Activated CD4-positive, alpha-beta T cell treated with anti-CD3 and anti-CD28 coated beads, Interleukin-2, amount 10 ng/mL, durations not matched to agents 24 days and 14 days (primary cell): ENCODE measurements at regions of chr17 and their contacts with region 1.

Region 1: GRCh38 chr17:13594762-13595598 is 6.7 kb downstream of the HS3ST3A1 start:
- DNase-seq: peak; percentile 95
- H3K4me3 Mint-ChIP-seq: no peak overlapping the region
- H3K27ac Mint-ChIP-seq: no peak overlapping the region
- H3K4me1 Mint-ChIP-seq: peaks cover 7% of the 10 kb centered on the region
- H3K27me3 Mint-ChIP-seq: peaks cover 47% of the 10 kb centered on the region

Region 2: DNA sequence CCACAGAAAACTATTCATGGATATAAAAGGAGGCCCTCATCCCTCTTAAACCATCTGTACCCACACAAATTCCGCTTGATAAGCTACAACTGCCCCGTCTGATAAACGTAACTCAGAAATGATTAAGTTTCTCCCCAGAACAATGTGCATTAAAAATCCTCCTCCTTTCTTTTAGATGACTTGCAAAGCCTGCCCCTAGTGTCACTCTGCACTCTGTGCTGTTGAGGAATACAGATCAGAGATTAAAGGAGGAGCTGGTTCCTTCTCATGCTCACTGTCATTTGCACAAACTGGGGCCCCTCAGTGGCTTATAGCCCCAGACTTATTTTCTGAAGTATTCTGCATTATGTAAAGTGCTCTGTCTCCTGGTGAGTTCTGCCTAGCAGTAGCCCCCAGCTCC is 608.4 kb after region 1 on chr17:
- intact Hi-C with region 1: loop called (anchors 5 kb)
- DNase-seq: peak; percentile 82
- H3K4me3 Mint-ChIP-seq: peak overlapping the region; percentile 52
- H3K27ac Mint-ChIP-seq: peak overlapping the region; percentile 81
- H3K4me1 Mint-ChIP-seq: peaks cover 76% of the 10 kb centered on the region
- H3K27me3 Mint-ChIP-seq: no peaks in the 10 kb centered on the region

Region 3: GRCh38 chr17:14813649-14814365 is 1218.8 kb after region 1 on chr17:
- intact Hi-C with region 1: loop called (anchors 1 kb)
- DNase-seq: peak; percentile 71
- H3K4me3 Mint-ChIP-seq: no peak overlapping the region
- H3K27ac Mint-ChIP-seq: no peak overlapping the region
- H3K4me1 Mint-ChIP-seq: no peaks in the 10 kb centered on the region
- H3K27me3 Mint-ChIP-seq: no peaks in the 10 kb centered on the region

Region 4: DNA sequence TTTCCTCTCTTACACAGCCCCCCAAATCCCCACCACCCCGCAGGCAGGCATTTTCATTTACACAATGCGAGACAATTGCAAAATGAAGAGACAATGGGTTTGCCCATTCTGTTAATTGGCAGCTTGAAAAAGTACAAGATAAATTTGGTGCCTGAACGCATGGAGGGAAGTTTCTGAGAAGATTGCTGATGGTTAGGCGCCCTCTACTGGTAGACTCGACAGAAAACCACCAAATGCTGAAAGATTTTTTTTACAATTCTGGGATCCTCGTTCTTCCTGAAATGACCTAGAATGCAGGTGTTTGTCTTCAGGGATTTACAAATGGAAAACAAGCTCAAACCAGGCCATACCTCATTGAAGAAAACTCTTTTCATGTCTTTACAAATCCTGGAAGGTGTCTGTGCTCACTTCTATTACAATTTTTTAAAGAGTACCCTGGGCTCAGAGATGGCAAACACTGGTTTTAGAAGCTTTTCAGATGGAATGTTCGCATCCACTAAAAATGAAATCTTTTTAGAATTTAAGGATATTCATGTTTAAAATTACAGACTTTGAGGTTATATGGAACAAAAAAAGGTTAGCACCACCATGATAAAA is 1331.6 kb after region 1 on chr17:
- intact Hi-C with region 1: loop called (anchors 1 kb)
- DNase-seq: peak; percentile 85
- H3K4me3 Mint-ChIP-seq: no peak overlapping the region
- H3K27ac Mint-ChIP-seq: no peak overlapping the region
- H3K4me1 Mint-ChIP-seq: no peaks in the 10 kb centered on the region
- H3K27me3 Mint-ChIP-seq: peaks cover 2% of the 10 kb centered on the region

Region 5: DNA sequence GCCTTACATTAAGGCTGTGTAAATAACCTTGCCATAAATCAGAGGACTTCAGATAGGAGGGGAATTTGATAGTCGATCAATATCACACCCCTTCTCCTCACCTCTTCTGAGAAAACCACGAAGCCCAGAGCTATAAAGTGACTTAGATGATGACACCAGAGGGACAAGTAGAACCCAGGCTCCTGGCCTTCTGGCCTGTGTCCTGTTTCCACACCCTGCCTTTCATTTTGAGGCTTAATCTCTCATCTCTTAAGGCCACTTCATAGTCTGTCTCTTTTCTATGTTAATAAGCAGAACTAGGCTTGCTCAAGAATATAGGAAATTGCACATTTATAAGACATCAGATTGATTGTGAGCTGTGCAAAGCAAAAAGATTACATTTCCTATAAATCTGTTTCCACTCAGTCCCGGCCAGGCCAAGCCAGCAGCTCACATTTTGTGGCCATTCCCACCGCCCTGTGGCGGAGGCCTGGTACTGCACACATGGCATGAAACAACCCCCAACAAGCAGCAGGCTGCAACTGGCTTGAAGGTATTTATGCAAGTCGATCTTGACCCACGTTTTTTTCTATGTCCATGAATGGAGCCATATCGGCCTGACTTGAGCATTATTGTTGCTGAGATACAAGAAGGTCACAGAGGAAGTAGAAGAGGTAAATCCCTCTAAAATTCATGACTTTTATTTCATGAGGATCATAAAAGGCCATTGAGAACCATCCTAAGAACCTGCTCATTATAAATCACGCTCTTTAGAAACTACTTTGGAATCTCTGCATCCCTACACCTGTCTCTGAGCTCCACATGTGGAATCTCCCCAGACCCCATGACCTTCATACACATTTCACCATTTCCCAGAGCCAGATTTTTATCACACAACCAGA is 1576.4 kb after region 1 on chr17:
- intact Hi-C with region 1: loop called (anchors 10 kb)
- DNase-seq: peak; percentile 72
- H3K4me3 Mint-ChIP-seq: no peak overlapping the region
- H3K27ac Mint-ChIP-seq: no peak overlapping the region
- H3K4me1 Mint-ChIP-seq: no peaks in the 10 kb centered on the region
- H3K27me3 Mint-ChIP-seq: no peaks in the 10 kb centered on the region